Esophagus muscularis mucosa (tissue), 4 donors: ENCODE measurements at regions of chr21 and their contacts with region 1.

Region 1: DNA sequence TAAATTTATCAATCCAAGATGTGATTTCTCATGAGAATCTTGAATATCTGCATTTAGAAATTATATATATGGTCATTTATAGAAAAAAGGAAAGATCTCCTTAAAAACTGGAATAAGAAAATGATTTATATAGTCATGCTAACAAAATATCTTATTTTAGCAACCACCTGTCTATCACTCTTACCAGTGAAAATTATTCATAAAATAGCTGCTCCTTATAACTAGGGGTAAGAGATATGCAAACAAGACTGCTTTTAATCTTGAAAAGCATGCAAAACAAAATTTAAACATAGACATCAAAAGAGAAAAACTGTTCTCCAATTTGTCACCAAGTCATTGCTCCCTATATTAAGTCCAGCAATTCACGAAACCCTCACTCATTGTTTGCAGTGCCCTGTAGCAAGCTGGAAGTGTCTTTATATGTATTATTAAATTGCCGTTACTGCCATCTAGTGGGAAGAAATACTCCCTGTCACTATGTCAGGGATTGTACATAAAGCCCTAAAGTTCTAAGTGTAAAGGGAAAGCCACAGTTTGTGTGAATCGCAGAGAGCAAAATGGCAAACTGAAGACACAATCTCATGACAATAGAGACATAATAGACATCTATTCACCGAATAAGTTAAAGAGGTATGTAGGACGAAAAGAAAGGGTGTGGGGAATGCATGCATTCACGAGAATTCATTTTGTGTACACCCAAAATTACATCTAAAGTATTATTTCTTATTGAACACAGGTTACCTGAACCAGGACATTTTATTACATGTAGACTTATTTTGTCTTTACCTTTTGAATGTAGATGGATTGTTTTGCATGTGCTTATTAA is 600.5 kb downstream of the USP25 start:
- DNase-seq: no peak
- H3K4me3 ChIP-seq: peak overlapping the region in 1 of 4 donors; percentile 5
- H3K27ac ChIP-seq: no peak overlapping the region
- H3K4me1 ChIP-seq: peaks cover 0 to 7% (median 3%) of the 10 kb centered on the region in 4 donors
- H3K27me3 ChIP-seq: no peaks in the 10 kb centered on the region
- CTCF ChIP-seq: peak; percentile 65 to 78 (median 78)
- EP300 ChIP-seq: no peak
- POLR2A ChIP-seq: no peak

Region 2: GRCh38 chr21:15895142-15896106 is 434.9 kb before region 1 on chr21:
- intact Hi-C with region 1: loop called (anchors 5 kb)
- DNase-seq: no peak
- H3K4me3 ChIP-seq: no peak overlapping the region
- H3K27ac ChIP-seq: no peak overlapping the region
- H3K4me1 ChIP-seq: peaks cover 0 to 14% (median 4%) of the 10 kb centered on the region in 4 donors
- H3K27me3 ChIP-seq: no peaks in the 10 kb centered on the region
- CTCF ChIP-seq: no peak
- EP300 ChIP-seq: no peak
- POLR2A ChIP-seq: no peak

Region 3: DNA sequence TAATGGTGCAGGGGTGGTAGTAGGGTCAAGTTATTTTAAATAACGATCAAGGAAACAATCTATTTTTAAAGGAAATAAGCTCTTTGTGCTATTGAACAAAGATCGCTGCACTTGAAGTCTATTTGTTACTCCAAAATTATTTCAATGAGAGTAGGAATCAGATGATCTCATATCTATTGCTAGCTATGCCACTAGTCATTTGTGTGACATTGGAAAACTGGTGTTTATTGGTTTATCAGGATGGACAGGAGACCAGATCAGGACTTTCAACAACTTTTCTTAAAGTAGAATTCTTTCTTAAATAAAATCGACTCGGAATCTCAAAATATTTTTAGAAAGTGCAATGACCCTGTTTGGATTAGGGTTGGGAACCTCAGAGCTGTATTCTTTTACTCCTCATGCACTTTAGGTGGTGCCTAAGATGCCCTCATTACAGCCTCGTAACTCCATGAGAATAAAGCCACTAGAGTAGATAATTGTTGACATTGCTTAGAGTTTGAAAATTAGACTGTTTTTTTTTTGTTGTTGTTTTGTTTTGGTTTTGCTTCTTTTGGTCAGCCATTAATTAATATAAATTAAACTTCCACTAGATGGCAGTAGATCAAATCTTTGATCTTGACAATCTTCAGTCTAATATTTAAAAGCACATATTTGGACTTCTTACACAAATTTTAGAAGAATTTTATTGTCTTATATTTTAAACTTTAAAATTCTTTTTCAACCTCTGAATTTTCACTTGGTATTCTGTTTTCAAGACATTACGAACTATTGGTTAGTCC is 248.1 kb before region 1 on chr21:
- intact Hi-C with region 1: loop called (anchors 2 kb)
- DNase-seq: no peak
- H3K4me3 ChIP-seq: peak overlapping the region in 2 of 4 donors; percentile 7 to 33
- H3K27ac ChIP-seq: no peak overlapping the region
- H3K4me1 ChIP-seq: no peaks in the 10 kb centered on the region
- H3K27me3 ChIP-seq: no peaks in the 10 kb centered on the region
- CTCF ChIP-seq: peak; percentile 13 to 52 (median 33)
- EP300 ChIP-seq: no peak
- POLR2A ChIP-seq: no peak